HCT116 (cell line): ENCODE measurements at regions of chr10 and their contacts with region 1.

Region 1: DNA sequence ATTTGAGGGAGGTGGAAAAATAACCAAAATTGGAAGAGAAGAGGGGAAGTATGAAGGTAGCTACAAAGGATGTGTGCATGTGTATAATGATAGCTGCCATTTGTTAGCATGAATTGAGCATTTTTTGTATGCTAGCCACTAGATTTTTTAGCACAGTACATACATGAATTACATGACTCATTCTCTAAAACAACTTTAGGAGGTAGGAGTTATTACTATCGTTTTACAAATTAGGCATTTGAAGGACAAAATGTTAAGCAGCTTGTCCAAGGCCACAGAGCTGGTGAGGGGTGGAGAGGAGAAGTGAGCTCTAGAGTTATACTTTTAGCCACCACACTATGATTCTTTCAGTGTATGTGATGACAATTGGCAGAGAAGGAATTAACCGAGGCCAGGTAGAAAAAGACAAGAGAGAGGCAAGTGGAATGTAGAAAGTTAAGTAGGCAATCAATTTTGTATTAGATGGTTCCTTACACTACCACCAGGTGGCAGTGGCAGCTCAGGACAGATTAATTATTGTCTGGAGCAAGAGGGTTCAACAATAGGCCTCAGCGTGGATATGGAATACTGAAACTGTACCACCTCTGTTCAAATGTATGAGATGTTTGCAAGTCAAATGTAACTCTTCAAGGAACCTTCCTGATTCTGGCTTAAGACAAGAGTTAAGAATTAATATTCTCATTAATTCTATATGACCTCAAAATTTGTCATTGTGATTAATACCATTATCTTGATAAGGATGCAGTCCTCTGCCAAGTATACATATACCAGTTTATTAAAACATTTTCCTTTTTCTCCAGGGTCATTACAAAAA is 128.0 kb downstream of the MBL2 start:
- DNase-seq: peak; percentile 51
- ATAC-seq: peak; percentile 86
- H3K4me3 ChIP-seq: no peak overlapping the region
- H3K27ac ChIP-seq: no peak overlapping the region
- H3K4me1 ChIP-seq: no peaks in the 10 kb centered on the region
- H3K27me3 ChIP-seq: no peaks in the 10 kb centered on the region
- CTCF ChIP-seq: peak; percentile 68 to 89 (median 84)
- POLR2A ChIP-seq: no peak
- RAD21 ChIP-seq: peak; percentile 88

Region 2: DNA sequence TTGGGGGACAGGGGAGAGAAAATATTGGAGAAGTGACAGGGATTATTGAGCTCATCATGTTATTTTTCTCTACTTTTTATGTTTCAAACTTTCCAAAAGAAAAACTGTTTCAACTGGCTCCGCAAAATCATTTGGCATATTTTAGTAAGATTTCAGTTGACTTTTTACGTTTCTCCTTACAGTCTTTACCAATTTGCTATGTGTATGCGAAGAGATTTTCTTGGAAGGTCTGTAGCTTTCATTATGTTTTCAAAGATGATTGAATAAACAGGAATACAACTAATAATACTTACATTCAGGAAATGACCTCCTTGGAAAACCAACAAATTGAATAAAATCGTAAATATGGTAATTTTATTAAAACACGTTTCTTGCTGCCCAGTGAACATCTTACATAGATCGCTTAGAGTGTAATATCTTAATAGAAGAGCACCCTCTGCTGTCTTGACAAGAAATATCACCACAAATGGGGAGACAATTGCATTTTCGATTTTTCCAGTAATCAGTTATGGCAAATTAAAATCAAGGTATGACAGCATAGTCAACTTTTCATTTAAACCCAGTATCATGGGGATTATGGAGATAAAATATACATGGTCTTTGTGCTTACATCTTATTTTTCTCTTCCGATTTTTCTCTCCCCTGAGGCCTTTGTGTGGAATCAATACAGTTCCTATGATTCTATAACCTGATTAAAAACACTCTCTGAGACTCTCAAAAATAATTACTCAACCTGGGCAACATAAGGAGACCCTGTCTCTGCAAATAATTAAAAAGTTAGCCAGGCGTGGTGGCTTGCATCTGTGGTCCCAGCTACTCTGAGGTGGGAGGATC is 84.9 kb after region 1 on chr10:
- CTCF ChIA-PET with region 1: interaction called, 40 read pairs
- POLR2A ChIA-PET with region 1: no interaction called
- RAD21 ChIA-PET with region 1: interaction called in 1 of 2 experiments, 3 read pairs
- intact Hi-C with region 1: loop called (anchors 1 kb)
- DNase-seq: peak; percentile 21
- ATAC-seq: peak; percentile 69
- H3K4me3 ChIP-seq: no peak overlapping the region; a peak in 1 of 4 replicates
- H3K27ac ChIP-seq: no peak overlapping the region
- H3K4me1 ChIP-seq: no peaks in the 10 kb centered on the region
- H3K27me3 ChIP-seq: no peaks in the 10 kb centered on the region
- CTCF ChIP-seq: peak; percentile 38 to 77 (median 63); a peak in 4 of 6 replicates
- POLR2A ChIP-seq: no peak
- RAD21 ChIP-seq: peak; percentile 78

Region 3: DNA sequence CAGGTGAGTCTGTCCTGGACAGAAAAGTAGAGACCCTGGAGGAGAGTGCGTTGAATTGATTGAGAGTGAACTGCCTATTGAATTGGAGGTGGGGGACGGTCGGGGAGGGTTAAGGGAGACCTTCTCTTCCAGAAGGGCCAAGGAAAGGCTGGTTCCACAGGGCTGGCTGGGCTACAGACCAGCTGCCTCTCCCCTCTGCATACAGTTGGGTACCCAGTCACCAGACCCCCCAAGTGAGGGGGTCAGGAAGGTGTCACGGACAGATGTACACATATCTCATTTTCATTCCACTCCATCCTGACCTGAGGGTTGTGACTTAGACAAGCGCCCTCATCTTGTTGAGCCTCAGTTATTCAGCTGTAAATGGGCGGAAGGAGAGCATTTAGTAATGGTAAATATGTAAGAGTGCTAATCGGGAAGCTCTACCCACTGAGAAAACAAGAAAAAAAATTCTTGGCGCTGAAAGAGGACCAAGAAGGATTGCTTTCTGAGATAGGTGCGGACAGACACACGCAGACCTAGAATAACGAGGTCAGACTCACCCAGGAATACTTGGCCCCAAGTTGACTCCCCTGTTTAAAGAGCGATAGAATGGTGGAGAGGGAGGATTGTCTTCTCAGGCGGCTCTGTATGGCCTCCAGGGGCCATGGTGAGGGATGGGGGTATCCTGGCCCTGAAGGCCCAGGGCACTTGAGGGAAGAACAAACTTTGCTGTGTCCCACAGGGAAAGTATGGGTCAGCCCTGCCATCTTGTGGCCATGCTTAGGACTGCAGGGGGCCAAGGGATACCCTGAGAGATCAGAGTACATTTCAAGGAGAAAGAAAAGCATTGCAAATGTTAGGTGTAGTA is 135.2 kb after region 1 on chr10:
- CTCF ChIA-PET with region 1: interaction called, 31 read pairs
- POLR2A ChIA-PET with region 1: no interaction called
- RAD21 ChIA-PET with region 1: no interaction called
- intact Hi-C with region 1: loop called (anchors 1 kb)
- DNase-seq: peak; percentile 45
- ATAC-seq: peak; percentile 95
- H3K4me3 ChIP-seq: no peak overlapping the region
- H3K27ac ChIP-seq: no peak overlapping the region
- H3K4me1 ChIP-seq: no peaks in the 10 kb centered on the region
- H3K27me3 ChIP-seq: no peaks in the 10 kb centered on the region
- CTCF ChIP-seq: peak; percentile 57 to 93 (median 90); a peak in 5 of 6 replicates
- POLR2A ChIP-seq: no peak
- RAD21 ChIP-seq: peak; percentile 83